ENCODE measurements at regions of chr22 and their contacts with region 1.

Region 1: GRCh38 chr22:46542011-46542985 is 4.9 kb upstream of the CELSR1 start:
- DNase-seq: peak; percentile 74
- ATAC-seq: peak; percentile 100
- H3K4me3 Mint-ChIP-seq: no peak overlapping the region
- H3K27ac Mint-ChIP-seq: no peak overlapping the region
- H3K4me1 Mint-ChIP-seq: peaks cover 13% of the 10 kb centered on the region
- H3K27me3 Mint-ChIP-seq: peaks cover 37% of the 10 kb centered on the region
- CTCF ChIP-seq: no peak

Region 2: DNA sequence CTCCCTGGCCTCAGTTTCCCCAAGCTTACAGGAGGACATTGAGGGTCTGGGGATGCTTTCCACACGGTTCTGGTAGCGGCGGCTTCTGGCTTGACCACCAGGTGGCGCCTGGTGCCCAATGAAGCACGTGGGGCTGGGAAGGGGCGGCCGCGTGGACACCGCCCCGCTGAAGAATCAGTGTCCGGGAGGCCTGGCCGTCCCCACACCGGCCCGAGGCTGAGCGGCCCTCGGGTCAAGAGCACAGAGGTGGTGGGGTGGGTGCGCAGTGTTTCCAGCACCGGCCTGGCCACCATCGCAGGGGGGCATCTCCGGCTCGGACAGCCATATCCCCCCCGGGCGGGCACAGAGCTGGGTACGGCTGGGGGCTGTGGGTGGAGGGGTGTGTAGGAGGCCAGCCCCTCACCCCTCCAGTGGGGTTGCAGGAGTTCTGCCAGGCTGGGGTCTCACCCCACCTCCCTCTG is 419.8 kb before region 1 on chr22:
- CTCF ChIA-PET with region 1: interaction called, 8 read pairs
- POLR2A ChIA-PET with region 1: no interaction called
- intact Hi-C with region 1: loop called (anchors 1 kb)
- DNase-seq: peak; percentile 69
- ATAC-seq: peak; percentile 81
- H3K4me3 Mint-ChIP-seq: no peak overlapping the region
- H3K27ac Mint-ChIP-seq: no peak overlapping the region
- H3K4me1 Mint-ChIP-seq: no peaks in the 10 kb centered on the region
- H3K27me3 Mint-ChIP-seq: peaks cover 2% of the 10 kb centered on the region
- CTCF ChIP-seq: peak; percentile 95

Region 3: DNA sequence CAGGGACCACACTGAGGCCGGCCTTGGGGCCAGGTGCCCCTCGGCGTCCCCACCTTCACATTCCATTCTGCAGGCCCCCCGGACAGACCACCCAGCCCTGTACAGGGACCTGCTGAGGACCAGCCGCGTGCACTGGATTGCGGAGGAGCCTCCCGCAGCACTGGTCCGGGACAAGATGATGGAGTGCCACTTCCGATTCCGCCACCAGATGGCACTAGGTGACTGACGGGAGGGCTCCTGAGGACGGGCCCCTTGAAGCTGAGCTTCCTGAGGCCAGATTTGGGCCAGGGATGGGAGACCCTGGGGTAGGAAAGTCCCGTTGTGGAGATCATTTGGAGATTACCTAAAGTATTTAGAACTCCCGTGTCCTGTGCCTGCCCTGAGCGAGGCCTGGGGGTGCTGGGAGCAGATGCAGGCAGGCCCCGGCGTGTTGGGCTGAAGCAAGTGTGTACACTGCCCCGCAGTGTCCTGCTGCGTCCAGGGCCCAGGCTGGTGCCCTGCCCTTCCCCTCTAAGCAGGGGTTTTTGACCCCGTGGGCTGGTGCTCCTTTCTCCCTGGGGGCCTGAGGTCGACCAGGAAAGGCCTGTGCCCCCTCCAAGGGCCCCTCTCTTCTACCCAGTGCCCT is 186.8 kb before region 1 on chr22:
- CTCF ChIA-PET with region 1: interaction called, 11 read pairs
- POLR2A ChIA-PET with region 1: no interaction called
- intact Hi-C with region 1: loop called (anchors 1 kb)
- DNase-seq: peak; percentile 61
- ATAC-seq: peak; percentile 45
- H3K4me3 Mint-ChIP-seq: no peak overlapping the region
- H3K27ac Mint-ChIP-seq: no peak overlapping the region
- H3K4me1 Mint-ChIP-seq: peaks cover 11% of the 10 kb centered on the region
- H3K27me3 Mint-ChIP-seq: no peaks in the 10 kb centered on the region
- CTCF ChIP-seq: peak; percentile 29

Region 4: GRCh38 chr22:46367707-46368191 is 174.5 kb before region 1 on chr22:
- CTCF ChIA-PET with region 1: interaction called, 96 read pairs
- POLR2A ChIA-PET with region 1: interaction called, 8 read pairs
- intact Hi-C with region 1: loop called (anchors 1 kb)
- DNase-seq: peak; percentile 72
- ATAC-seq: peak; percentile 65
- H3K4me3 Mint-ChIP-seq: no peak overlapping the region
- H3K27ac Mint-ChIP-seq: no peak overlapping the region
- H3K4me1 Mint-ChIP-seq: peaks cover 12% of the 10 kb centered on the region
- H3K27me3 Mint-ChIP-seq: no peaks in the 10 kb centered on the region
- CTCF ChIP-seq: peak; percentile 58

Region 5: DNA sequence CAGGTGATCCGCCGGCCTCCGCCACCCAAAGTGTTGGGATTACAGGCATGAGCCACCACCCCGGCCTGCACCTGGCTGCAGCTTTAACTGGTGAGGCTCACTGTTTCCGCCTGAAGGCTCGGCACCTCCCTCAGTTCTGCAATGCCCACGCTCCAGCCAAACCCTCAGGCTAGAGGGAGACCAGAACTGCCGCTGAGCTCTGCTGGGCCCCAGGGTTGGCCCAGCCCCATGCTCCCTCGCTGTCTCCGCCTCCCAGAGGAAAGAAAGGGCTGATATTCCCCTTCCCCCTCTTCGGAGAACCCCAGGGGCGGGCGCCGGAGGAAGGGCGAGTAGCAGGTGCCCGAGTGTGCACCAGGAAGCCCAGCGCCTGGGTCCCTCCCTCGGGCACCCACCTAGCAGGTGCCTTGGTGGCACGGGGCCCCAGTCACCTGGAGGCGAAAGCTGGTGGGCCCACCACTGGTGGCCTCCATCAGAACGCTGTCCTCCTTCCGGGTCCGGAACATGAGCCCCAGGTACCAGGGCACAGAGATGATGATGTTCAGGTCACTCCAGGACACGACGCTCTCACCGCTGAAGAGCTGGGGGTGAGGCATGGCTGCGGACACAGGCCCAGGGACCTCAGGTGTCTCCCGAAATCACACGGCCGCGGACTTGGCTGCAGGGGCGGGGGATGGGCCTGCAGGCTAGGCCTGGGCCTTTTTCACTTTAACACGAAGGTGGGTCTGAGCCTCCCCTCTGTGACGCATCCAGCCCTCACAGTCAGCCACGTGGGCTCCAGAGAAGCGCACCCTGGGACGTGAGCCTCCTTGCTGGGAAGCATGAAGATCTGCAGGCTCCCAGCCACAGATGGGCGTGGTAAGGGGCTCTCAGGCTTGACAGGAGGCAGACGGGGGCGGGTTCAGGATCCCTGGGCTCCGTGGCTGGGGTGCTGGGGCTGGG is 133.5 kb before region 1 on chr22:
- CTCF ChIA-PET with region 1: no interaction called
- POLR2A ChIA-PET with region 1: no interaction called
- intact Hi-C with region 1: no loop called
- DNase-seq: no peak
- ATAC-seq: no peak
- H3K4me3 Mint-ChIP-seq: no peak overlapping the region
- H3K27ac Mint-ChIP-seq: no peak overlapping the region
- H3K4me1 Mint-ChIP-seq: no peaks in the 10 kb centered on the region
- H3K27me3 Mint-ChIP-seq: no peaks in the 10 kb centered on the region
- CTCF ChIP-seq: no peak

Region 6: GRCh38 chr22:46432164-46433068 is 109.9 kb before region 1 on chr22:
- CTCF ChIA-PET with region 1: no interaction called
- POLR2A ChIA-PET with region 1: no interaction called
- intact Hi-C with region 1: loop called (anchors 1 kb)
- DNase-seq: peak; percentile 34
- ATAC-seq: peak; percentile 62
- H3K4me3 Mint-ChIP-seq: peak overlapping the region; percentile 94
- H3K27ac Mint-ChIP-seq: peak overlapping the region; percentile 98
- H3K4me1 Mint-ChIP-seq: peaks cover 40% of the 10 kb centered on the region
- H3K27me3 Mint-ChIP-seq: no peaks in the 10 kb centered on the region
- CTCF ChIP-seq: no peak

Region 7: DNA sequence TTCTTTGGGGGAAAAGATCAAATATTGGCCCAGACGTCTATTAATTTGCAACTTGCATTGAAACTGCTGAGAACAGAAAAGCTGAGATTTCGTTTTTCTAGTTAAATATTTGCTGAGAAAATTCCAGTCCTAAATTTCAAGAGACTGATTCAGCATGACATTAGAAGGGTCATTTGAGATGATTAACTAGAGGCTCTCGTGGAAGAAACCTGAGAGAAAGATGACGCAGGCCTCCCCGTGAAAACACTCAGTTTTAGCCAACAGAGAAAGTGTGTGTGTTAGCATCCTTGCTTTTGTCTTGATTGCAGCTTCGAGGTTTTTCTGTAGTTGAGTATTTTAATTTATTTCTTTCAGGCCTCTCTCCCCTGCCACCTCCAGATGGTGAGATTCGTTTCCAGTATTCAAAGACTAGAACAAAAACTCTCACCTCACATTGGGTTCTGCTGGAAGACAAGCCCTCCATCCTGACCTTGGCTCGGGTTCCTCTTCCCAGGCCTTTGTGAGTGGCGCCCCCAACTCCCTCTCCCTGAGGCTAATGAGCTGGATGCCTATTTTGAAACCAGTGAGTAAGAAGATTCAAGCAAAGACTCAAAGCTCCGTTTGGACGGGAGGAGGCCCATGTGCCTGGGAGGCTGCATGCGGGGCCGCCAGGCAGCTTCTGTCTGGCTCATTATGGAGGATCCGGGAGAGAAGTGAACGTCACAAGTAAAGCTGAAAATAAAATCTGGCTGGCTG is 57.3 kb before region 1 on chr22:
- CTCF ChIA-PET with region 1: no interaction called
- POLR2A ChIA-PET with region 1: no interaction called
- intact Hi-C with region 1: no loop called
- DNase-seq: no peak
- ATAC-seq: no peak
- H3K4me3 Mint-ChIP-seq: no peak overlapping the region
- H3K27ac Mint-ChIP-seq: no peak overlapping the region
- H3K4me1 Mint-ChIP-seq: peaks cover 13% of the 10 kb centered on the region
- H3K27me3 Mint-ChIP-seq: peaks cover 16% of the 10 kb centered on the region
- CTCF ChIP-seq: no peak